Activated CD4-positive, alpha-beta T cell treated with anti-CD3 and anti-CD28 coated beads, Interleukin-2, amount 10 ng/mL, durations not matched to agents 24 days and 14 days (primary cell): ENCODE measurements at regions of chr3 and their contacts with region 1.

Region 1: DNA sequence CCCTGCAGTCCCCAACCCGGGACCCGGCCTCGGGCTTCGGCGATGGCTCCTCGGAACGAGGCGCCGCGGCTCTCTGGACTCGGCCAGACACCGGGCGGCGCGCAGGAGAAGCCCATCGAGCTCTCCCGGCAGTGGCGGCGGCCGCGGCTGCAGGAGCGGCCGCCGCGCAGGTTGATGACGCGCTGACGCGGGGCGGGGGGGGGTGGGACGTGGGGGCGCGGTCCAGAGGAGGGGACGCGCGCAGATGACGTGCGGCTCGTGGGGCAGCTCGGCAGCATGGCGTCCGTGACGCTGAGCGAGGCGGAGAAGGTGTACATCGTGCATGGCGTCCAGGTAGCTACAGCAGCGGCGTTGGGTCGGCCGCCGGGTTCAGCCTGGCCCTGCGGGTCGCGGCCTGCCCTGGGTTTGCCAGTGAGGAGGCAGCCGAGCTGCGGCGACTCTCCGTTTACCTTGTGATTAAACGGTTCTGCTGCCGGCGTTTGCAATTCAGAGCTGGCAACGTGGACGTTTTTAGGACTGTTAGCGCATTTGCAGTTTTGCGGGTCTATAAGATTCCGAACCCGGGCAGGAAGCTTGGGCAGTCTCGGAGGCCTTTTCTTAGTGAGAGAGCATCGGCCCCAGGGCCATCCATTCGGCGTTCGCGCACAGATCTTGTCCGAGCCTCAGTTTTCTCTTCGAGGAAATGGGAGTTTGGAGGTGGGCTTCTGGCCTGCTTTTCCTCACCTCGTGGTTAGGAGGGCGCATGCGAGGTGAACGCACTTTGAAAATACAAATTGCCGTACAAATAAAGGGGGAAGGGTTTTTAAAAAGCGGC is at the starts of genes EXOSC7 and ZDHHC3:
- DNase-seq: peak; percentile 95
- H3K4me3 Mint-ChIP-seq: peak within 1 kb of the TSS; percentile 98
- H3K27ac Mint-ChIP-seq: peak within 1 kb of the TSS; percentile 98
- H3K4me1 Mint-ChIP-seq: peaks cover 50% of the 10 kb centered on the region
- H3K27me3 Mint-ChIP-seq: no peaks in the 10 kb centered on the region
- total RNA-seq, gene EXOSC7: 95.5 and 97.9 TPM in 2 replicates
- total RNA-seq, gene ZDHHC3: 42.0 and 46.2 TPM in 2 replicates

Region 2: GRCh38 chr3:44861412-44862220 is 114.6 kb before region 1 on chr3 and contains the start of gene TMEM42:
- intact Hi-C with region 1: loop called (anchors 5 kb)
- DNase-seq: peak; percentile 97
- H3K4me3 Mint-ChIP-seq: peak within 1 kb of the TSS; percentile 90
- H3K27ac Mint-ChIP-seq: peak within 1 kb of the TSS; percentile 91
- H3K4me1 Mint-ChIP-seq: peaks cover 32% of the 10 kb centered on the region
- H3K27me3 Mint-ChIP-seq: no peaks in the 10 kb centered on the region
- total RNA-seq, gene TMEM42: 11.6 and 13.0 TPM in 2 replicates

Region 3: DNA sequence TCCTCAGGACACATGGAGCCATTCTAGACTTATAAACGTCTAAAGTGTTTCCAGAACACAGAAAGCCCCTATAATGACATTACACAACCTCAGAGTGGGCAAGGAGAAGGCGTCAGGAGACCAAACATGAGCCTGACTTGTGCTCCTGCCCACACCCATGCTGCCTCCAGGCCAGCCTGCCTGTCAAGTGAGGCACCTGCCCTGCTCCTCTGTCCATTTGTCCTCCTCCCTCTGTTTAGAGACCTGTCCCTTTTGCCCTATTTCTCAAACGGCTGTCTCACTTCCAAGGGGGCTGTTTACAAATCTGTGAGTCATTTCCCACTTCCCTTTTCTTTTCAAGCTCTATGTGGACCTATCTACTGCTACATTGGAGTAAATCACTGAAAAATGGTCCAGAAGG is 21.2 kb before region 1 on chr3:
- intact Hi-C with region 1: no loop called
- DNase-seq: no peak
- H3K4me3 Mint-ChIP-seq: no peak overlapping the region
- H3K27ac Mint-ChIP-seq: no peak overlapping the region
- H3K4me1 Mint-ChIP-seq: no peaks in the 10 kb centered on the region
- H3K27me3 Mint-ChIP-seq: no peaks in the 10 kb centered on the region